ENCODE measurements at regions of chr1 and their contacts with region 1.

Region 1: DNA sequence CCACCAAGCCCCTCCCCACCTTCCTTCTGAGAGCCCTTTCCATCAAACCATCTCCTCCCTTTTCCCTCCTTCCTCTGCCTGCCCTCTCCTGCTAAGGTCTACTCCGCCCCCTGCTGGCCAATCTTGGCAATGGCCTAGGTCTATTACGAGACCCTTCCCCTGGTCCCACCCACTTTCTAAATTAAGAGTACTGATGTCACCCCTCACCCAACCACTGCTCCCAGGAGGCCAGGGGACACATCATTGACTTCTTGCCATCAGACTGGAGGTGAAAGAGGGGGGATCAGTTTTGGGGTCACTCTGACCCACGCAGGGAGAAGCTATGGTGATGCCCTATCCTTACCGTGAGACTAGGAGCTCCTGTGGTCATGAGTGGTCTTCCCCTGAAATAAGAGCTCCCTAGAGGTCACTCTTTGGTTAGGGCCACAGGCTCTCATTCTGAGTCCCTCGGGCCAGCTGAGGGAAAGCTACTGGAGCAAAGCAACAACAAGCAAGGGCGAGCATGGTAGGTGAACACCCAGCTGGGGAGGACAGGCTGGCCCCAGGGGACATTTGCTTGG is 34.6 kb upstream of the S100A7 start:
- DNase-seq: peak; percentile 77
- ATAC-seq: peak; percentile 53 to 79

Region 2: DNA sequence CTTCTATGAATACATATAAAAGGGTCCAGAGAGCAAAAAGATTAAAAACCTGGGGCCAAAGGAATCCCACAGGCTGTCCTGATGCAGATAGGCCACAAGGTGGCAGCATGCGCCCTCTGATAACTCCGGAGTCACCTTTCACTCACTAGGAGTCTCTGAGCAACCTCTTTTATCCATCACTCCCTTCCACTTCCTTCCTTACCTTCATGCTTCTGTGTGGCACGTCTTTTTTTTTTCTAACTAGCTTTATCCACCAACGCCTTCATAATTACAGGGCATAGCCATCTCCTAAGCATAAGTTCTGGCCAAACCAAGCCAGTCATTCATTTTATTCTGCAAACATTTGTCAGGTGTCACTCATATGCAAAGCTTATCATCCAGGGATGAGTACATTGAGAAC is 142.5 kb before region 1 on chr1:
- intact Hi-C with region 1: loop called (anchors 1 to 5 kb)
- DNase-seq: peak; percentile 72
- ATAC-seq: peak; percentile 75 to 82

Region 3: GRCh38 chr1:153587314-153587713 is 92.3 kb after region 1 on chr1:
- intact Hi-C with region 1: no loop called
- DNase-seq: no peak
- ATAC-seq: peak in 1 of 2 donors; percentile 81

Region 4: DNA sequence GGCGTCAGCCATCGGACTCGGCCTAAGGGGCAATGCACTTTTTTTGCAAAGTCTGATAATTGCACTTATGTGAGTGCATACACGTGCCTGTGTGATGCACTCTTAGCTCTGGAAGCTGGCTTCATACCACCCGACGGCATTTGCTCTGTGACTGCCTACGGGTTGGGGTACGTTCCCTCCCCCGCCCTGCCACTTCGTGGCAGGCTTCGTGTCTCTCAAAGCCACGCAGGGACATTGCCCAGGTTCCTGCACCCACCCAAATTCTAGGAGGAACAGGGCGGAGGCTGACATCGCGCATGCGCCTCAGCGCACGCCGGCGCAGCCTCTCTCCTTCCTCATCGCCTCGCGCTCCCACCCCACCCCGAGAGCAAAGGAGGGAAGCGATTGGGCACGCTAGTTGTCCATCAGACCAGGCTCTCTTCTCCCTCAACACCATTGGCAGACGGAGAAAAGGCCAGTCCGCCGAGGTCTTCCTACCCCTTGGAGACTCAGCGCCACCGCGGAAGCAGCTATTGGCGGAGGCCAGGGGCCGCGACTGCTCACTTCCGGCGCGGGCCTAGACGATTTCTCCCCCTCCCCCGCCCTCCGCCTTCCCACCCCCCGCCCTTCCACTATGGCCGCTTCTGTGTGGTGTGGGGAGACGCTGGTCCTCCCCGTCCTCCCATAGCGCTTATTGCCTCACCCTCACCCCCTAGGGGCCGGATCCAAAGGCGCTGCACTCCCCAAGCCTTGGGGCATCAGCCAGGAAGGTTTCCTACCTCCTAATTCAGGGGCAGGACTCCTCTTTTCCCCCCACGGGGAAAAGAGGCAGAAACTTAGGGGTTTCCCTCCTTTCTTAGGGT is 232.6 kb after region 1 on chr1 and contains the start of gene INTS3:
- intact Hi-C with region 1: no loop called
- DNase-seq: peak; percentile 99
- ATAC-seq: peak; percentile 99 to 100
- total RNA-seq, gene INTS3: 28.2 to 34.1 TPM